AG04449 (cell line): ENCODE measurements at regions of chr18 and their contacts with region 1.

Region 1: GRCh38 chr18:49189772-49190171 is 239.0 kb upstream of the SMAD7 start:
- DNase-seq: no peak
- H3K4me3 ChIP-seq: no peak overlapping the region
- CTCF ChIP-seq: no peak

Region 2: GRCh38 chr18:49178736-49179135 is 11.0 kb before region 1 on chr18:
- CTCF ChIA-PET with region 1: interaction called, 18 read pairs
- POLR2A ChIA-PET with region 1: no interaction called
- DNase-seq: no peak
- H3K4me3 ChIP-seq: no peak overlapping the region
- CTCF ChIP-seq: peak; percentile 54